ENCODE measurements at regions of chr2 and their contacts with region 1.

Region 1: DNA sequence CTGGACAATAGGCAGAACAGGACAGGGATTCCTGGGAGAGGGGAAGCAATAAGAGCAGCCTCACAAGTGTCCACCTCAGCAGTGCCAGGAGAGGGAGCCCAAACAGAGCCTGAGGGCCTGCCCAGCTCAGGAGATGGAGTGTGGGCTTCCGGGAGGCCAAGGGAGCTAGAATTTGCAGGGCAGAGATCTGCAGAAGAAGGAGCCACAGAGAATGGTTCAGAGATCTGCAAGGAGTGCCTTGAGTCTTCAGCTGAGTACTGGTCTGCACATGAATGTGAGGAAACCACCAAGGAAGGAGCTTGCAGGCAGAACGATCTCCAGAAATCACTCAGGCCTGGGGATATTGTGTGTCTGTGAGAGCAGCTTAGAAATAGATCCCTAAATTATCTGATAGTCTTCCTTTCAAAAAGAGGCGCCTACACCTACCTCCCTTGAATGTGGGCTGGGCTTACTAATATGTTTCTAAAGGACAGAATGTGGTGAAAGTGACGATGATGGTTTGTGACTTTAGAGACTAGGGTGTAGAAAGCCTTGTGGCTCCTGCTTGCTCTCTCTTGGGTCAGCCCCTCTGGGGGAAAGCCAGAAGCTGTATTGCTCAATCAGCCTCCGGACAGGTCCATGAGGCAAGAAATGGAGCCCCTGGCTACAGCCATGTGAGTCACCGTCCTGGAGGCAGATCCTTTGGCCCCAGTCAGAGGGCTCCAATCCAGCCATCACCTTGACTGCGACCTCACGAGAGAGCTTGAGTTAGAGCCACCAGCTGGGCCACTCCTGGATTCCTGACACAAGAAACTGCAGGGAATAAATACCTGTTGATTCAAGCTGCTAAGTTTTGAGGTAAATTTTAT is 7.6 kb upstream of the LPIN1 start:
- DNase-seq: peak; percentile 46
- ATAC-seq: peak; percentile 80
- H3K4me3 Mint-ChIP-seq: no peak overlapping the region
- H3K27ac Mint-ChIP-seq: no peak overlapping the region
- H3K4me1 Mint-ChIP-seq: peaks cover 14% of the 10 kb centered on the region
- H3K27me3 Mint-ChIP-seq: peaks cover 11% of the 10 kb centered on the region

Region 2: GRCh38 chr2:11753886-11754699 is 15.3 kb after region 1 on chr2:
- CTCF ChIA-PET with region 1: interaction called, 26 read pairs
- POLR2A ChIA-PET with region 1: interaction called, 16 read pairs
- DNase-seq: peak; percentile 74
- ATAC-seq: peak; percentile 67
- H3K4me3 Mint-ChIP-seq: peak overlapping the region; percentile 73
- H3K27ac Mint-ChIP-seq: peak overlapping the region; percentile 93
- H3K4me1 Mint-ChIP-seq: peaks cover 93% of the 10 kb centered on the region
- H3K27me3 Mint-ChIP-seq: no peaks in the 10 kb centered on the region

Region 3: DNA sequence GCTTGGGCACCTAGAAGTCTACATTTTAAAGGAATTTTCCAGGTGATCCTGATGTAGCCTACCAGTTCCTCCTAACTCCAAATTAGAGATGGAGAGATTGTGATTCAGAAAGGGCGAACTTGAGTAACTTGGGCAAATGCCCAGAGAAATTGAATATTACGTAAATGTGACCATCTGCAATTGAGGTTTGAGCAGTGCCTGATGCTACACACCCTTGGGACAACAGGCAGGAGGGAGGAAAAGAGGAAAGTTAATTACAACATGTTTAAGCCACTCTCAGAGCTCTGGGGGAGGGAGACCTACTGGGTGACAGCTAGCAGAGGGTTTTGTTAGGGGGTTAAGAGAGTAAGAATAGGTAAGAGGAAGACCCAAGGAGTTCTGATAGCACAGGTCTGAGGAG is 216.5 kb after region 1 on chr2:
- CTCF ChIA-PET with region 1: no interaction called
- POLR2A ChIA-PET with region 1: no interaction called
- DNase-seq: no peak
- ATAC-seq: no peak
- H3K4me3 Mint-ChIP-seq: no peak overlapping the region
- H3K27ac Mint-ChIP-seq: no peak overlapping the region
- H3K4me1 Mint-ChIP-seq: no peaks in the 10 kb centered on the region
- H3K27me3 Mint-ChIP-seq: peaks cover 25% of the 10 kb centered on the region

Measured in activated CD8-positive, alpha-beta T cell treated with anti-CD3 and anti-CD28 coated beads, Interleukin-2, amount 10 ng/mL, durations not matched to agents 7 days and 5 days (primary cell).